Uterus (tissue), 4 donors: ENCODE measurements at regions of chr21 and their contacts with region 1.

Region 1: DNA sequence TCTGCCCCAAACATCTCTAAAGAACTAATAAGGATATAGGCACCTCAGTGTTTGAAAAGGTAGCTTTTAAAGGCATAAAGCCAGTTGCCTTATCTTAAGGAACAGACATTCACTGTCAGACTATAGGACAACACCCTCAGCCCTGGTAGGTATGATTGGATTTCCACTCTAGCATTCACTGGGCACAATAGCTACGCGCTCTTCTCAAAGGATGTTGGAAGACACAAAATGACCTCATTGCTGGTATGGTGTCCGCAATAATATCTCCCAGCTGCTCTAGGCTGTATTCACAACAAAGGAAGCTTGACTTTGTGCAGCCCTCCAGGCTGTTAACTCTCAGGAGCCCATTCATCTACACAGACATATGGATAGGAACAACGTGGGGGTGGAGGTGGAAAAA is 119.4 kb upstream of the CXADR start:
- DNase-seq: no peak
- H3K4me3 ChIP-seq: no peak overlapping the region
- H3K27ac ChIP-seq: no peak overlapping the region
- H3K4me1 ChIP-seq: no peaks in the 10 kb centered on the region
- H3K27me3 ChIP-seq: no peaks in the 10 kb centered on the region
- CTCF ChIP-seq: no peak
- POLR2A ChIP-seq: no peak

Region 2: GRCh38 chr21:17427831-17428483 is 34.5 kb after region 1 on chr21:
- intact Hi-C with region 1: no loop called
- DNase-seq: no peak
- H3K4me3 ChIP-seq: no peak overlapping the region
- H3K27ac ChIP-seq: no peak overlapping the region
- H3K4me1 ChIP-seq: no peaks in the 10 kb centered on the region
- H3K27me3 ChIP-seq: no peaks in the 10 kb centered on the region
- CTCF ChIP-seq: no peak
- POLR2A ChIP-seq: no peak

Region 3: DNA sequence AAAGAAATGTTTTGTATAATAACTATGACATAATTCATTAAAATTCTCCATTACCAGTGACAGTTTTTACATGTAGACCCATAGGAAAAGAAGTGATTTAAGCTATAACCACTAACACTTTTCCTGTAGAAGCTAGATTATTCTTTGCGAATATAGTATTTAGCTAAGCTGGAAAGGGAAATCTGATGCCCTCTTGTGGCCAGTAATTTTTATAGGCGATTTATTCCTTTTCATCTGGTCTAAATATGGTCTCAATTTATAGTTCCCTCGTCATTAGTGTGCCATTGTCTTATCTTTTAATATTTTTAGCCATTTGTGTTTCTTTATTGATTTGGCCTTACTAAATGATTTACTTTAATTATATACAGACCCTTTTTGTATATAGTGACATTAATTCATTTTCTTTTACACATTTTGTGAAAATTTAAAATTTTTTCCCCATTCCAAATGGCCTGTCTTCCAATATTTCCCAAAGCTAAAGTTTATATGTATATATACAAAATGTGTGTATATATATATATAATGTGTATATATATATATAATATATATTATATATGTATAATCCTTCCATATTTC is 192.6 kb after region 1 on chr21:
- intact Hi-C with region 1: loop called (anchors 10 kb)
- DNase-seq: no peak
- H3K4me3 ChIP-seq: no peak overlapping the region
- H3K27ac ChIP-seq: no peak overlapping the region
- H3K4me1 ChIP-seq: no peaks in the 10 kb centered on the region
- H3K27me3 ChIP-seq: no peaks in the 10 kb centered on the region
- CTCF ChIP-seq: peak; percentile 56 to 69 (median 64)
- POLR2A ChIP-seq: no peak

Region 4: DNA sequence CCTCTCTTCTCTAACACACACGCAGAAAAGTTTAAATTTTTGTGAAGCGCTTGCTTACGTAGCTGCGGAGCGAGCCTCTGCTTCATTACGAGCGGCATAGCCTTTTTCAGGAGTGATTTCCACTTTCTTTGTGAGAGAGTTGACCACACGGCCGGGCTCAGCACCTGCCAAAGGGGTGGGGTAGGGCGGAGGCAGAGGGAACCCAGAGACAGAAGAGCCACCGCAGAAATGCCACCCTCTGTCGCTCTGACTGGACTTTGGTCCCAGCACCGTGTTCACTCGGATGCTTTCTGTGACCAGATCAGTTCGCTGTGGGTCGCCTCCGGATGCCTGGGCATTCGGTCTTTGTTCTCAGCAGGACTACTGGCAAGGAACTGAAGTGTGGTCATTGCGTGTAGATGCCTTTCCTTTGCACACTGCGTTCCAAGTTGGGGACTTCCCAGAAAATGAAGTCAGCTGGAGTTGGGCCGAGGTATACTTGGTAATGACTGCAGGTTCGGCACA is 852.1 kb after region 1 on chr21:
- intact Hi-C with region 1: no loop called
- DNase-seq: no peak
- H3K4me3 ChIP-seq: peak overlapping the region in 1 of 2 donors; percentile 22
- H3K27ac ChIP-seq: no peak overlapping the region
- H3K4me1 ChIP-seq: peaks cover 0 to 4% of the 10 kb centered on the region in 2 donors
- H3K27me3 ChIP-seq: peaks cover 0 to 17% of the 10 kb centered on the region in 2 donors
- CTCF ChIP-seq: no peak
- POLR2A ChIP-seq: no peak